Activated CD4-positive, alpha-beta memory T cell treated with anti-CD3 and anti-CD28 coated beads for 36 hours (primary cell): ENCODE measurements at regions of chr12 and their contacts with region 1.

Region 1: GRCh38 chr12:8544295-8544694 is 3.6 kb upstream of the CLEC4E start:
- DNase-seq: peak; percentile 80
- H3K4me3 Mint-ChIP-seq: no peak overlapping the region
- H3K27ac Mint-ChIP-seq: no peak overlapping the region
- H3K4me1 Mint-ChIP-seq: peaks cover 9% of the 10 kb centered on the region
- H3K27me3 Mint-ChIP-seq: peaks cover 19% of the 10 kb centered on the region

Region 2: GRCh38 chr12:8519171-8519570 is 25.1 kb before region 1 on chr12:
- CTCF ChIA-PET with region 1: interaction called, 14 read pairs
- POLR2A ChIA-PET with region 1: no interaction called
- intact Hi-C with region 1: no loop called
- DNase-seq: no peak
- H3K4me3 Mint-ChIP-seq: no peak overlapping the region
- H3K27ac Mint-ChIP-seq: no peak overlapping the region
- H3K4me1 Mint-ChIP-seq: no peaks in the 10 kb centered on the region
- H3K27me3 Mint-ChIP-seq: peaks cover 34% of the 10 kb centered on the region

Region 3: GRCh38 chr12:8554451-8555195 is 10.3 kb after region 1 on chr12:
- CTCF ChIA-PET with region 1: interaction called, 23 read pairs
- POLR2A ChIA-PET with region 1: no interaction called
- intact Hi-C with region 1: no loop called
- DNase-seq: no peak
- H3K4me3 Mint-ChIP-seq: no peak overlapping the region
- H3K27ac Mint-ChIP-seq: no peak overlapping the region
- H3K4me1 Mint-ChIP-seq: peaks cover 4% of the 10 kb centered on the region
- H3K27me3 Mint-ChIP-seq: no peaks in the 10 kb centered on the region

Region 4: DNA sequence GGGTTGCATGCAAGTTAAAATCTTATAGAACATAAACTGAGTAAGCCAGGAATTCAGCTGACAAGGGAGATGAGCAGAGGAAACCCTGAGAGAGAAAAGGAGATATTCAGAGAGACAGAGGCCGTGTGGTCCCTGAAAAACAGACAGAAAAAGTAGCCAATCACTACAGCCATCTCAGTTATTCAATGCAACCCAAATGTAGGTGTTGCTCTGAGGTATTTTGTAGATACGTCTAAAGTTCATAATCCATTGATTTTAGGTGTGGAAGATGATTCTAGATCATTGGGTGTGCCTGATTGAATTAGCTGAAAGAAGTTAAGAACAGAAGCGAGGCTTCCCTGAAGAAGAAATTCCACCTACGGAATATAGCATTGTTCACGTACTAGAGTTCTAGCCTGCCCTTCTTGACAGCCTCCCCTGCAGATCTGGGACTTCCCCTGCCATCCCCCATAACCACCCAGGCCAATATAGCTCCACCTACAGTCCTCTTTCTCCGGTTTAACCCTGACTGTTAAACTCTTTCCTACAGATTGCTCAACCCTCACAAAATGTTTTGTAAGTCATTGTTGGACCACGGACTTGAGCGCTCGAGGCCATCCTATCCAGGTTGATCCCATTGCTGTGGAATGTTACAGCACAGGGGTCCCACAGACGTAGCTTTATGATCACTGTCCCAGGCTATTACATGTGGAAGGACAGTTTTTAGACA is 46.7 kb after region 1 on chr12:
- CTCF ChIA-PET with region 1: interaction called, 18 read pairs
- POLR2A ChIA-PET with region 1: no interaction called
- intact Hi-C with region 1: no loop called
- DNase-seq: no peak
- H3K4me3 Mint-ChIP-seq: no peak overlapping the region
- H3K27ac Mint-ChIP-seq: no peak overlapping the region
- H3K4me1 Mint-ChIP-seq: peaks cover 8% of the 10 kb centered on the region
- H3K27me3 Mint-ChIP-seq: no peaks in the 10 kb centered on the region

Region 5: DNA sequence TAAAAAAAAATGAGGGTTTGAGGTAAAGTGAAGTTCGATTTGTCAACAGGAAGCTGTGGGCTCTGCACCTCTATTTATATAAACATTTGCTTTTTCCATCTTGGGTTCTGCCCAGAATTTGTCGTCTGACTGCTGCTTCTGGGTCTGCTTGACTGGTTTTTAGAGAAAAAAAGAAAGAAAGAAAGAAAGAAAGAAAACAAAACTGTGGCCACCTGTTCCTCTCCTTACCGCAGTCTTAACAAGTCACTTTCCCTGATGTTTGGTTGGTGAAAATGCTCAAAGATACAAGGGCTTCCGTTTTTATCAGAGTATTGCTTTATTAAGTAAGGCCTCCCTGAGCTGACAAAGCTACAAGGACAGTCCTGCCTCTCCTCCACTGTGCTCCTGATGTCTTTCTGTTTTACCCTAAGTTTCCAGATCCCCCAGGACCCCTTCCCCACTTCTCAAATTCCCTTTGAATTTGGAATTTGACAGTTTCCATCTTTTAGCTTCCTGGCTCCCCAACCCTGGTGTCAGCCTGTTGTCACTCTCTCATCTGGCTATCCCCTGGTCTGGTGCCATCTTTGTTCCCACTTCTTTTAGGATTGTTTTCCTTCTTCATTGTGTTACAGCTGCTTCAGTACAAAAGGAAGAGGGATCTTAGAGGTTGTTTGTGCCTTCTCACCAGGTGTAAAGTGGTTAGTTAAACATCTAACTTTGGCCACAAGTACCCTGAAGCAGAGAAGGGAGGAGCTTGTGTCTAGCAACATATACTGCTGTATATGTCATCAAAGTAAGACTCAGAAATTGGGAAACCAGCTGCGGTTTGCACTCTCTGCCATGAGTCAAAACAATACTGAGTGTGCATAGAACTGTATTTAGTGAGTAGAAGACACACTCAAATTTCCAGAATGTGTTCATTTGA is 100.3 kb after region 1 on chr12:
- CTCF ChIA-PET with region 1: interaction called, 8 read pairs
- POLR2A ChIA-PET with region 1: no interaction called
- intact Hi-C with region 1: loop called (anchors 10 kb)
- DNase-seq: peak; percentile 84
- H3K4me3 Mint-ChIP-seq: peak overlapping the region; percentile 6
- H3K27ac Mint-ChIP-seq: peak overlapping the region; percentile 43
- H3K4me1 Mint-ChIP-seq: peaks cover 44% of the 10 kb centered on the region
- H3K27me3 Mint-ChIP-seq: peaks cover 10% of the 10 kb centered on the region

Region 6: GRCh38 chr12:8742501-8742900 is 198.2 kb after region 1 on chr12:
- CTCF ChIA-PET with region 1: no interaction called
- POLR2A ChIA-PET with region 1: no interaction called
- intact Hi-C with region 1: no loop called
- DNase-seq: no peak
- H3K4me3 Mint-ChIP-seq: no peak overlapping the region
- H3K27ac Mint-ChIP-seq: no peak overlapping the region
- H3K4me1 Mint-ChIP-seq: no peaks in the 10 kb centered on the region
- H3K27me3 Mint-ChIP-seq: no peaks in the 10 kb centered on the region

Region 7: DNA sequence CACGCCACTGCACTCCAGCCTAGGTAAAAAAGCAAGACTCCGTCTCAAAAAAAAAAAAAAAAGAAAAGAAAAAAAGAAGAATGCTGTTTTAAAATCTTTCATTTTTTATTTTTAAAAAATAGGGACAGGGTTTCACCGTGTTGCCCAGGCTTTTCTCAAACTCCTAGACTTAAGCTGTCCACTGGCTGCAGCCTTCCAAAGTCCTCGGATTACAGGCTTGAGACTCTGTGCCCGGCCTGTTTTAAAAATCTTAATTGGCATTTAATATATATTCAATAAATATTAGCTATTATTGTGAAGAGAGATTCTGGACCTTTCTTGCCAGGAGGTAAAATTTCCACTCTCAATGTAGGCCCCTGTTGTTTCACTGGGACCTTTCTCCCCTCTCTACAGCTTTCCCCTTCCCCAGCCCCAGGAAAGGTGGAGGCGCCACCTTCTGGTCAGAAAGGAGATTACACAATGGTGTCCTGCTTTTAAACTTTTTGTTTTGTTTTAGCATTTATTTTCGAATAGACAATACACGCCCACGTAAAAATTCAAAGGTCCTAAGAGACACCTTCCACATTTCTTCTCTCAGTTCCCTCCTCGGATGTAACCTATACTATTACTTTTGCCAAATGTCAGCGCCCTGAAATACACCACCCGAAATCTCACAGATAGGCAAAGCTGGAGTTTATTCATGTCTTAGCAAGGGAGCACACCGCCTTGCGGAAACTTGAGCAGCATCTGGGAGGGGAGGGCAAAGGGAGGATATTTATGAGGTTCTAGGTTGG is 346.2 kb after region 1 on chr12:
- CTCF ChIA-PET with region 1: interaction called, 29 read pairs
- POLR2A ChIA-PET with region 1: no interaction called
- intact Hi-C with region 1: loop called (anchors 10 kb)
- DNase-seq: peak; percentile 65
- H3K4me3 Mint-ChIP-seq: peak overlapping the region; percentile 83
- H3K27ac Mint-ChIP-seq: no peak overlapping the region
- H3K4me1 Mint-ChIP-seq: peaks cover 5% of the 10 kb centered on the region
- H3K27me3 Mint-ChIP-seq: no peaks in the 10 kb centered on the region